B cell (primary cell): ENCODE measurements at regions of chr1 and their contacts with region 1.

Region 1: DNA sequence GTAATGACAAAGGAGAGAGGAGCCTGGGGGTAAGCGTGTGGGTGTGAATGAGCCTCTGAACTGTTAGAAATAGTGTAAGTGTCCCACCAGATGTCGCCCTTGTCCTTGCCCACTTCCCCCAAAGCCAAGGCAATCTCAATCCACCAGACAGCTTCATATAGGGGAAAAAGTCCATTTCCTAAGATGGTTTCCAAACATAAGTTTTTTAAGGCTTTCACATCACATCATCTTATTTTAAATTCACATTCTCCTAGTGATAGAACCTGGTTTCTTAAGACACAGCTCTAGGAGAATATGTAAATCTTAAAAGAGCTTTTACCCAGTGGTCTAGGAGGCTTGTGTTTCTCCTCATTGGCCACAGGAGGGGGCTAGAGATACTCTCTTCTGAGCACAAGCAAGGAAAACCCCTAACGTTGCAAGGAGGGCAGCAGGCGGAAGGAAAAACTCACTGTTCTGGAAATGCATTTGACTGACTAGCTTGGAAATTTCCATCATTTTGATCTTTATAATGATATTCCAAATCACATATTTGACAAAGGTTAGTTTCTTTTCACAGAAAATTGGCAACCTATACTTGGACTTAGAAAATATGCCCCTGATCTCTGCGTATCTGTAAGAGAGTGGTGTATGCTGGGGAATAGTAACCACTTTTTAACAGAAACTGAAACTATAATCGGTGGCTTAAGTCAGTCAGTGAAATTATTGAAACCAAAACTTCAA is 51.9 kb upstream of the LPAR3 start:
- DNase-seq: peak; percentile 95
- ATAC-seq: peak; percentile 93
- H3K4me3 ChIP-seq: peak overlapping the region; percentile 49 to 76 (median 60)
- H3K4me3 Mint-ChIP-seq: peak overlapping the region; percentile 80
- H3K27ac ChIP-seq: peak overlapping the region; percentile 78 to 83
- H3K27ac Mint-ChIP-seq: peak overlapping the region; percentile 87
- H3K4me1 ChIP-seq: peaks cover 0 to 13% of the 10 kb centered on the region in 2 donors
- H3K4me1 Mint-ChIP-seq: peaks cover 10% of the 10 kb centered on the region
- H3K27me3 ChIP-seq: no peaks in the 10 kb centered on the region
- H3K27me3 Mint-ChIP-seq: no peaks in the 10 kb centered on the region
- CTCF ChIP-seq: peak; percentile 99

Region 2: DNA sequence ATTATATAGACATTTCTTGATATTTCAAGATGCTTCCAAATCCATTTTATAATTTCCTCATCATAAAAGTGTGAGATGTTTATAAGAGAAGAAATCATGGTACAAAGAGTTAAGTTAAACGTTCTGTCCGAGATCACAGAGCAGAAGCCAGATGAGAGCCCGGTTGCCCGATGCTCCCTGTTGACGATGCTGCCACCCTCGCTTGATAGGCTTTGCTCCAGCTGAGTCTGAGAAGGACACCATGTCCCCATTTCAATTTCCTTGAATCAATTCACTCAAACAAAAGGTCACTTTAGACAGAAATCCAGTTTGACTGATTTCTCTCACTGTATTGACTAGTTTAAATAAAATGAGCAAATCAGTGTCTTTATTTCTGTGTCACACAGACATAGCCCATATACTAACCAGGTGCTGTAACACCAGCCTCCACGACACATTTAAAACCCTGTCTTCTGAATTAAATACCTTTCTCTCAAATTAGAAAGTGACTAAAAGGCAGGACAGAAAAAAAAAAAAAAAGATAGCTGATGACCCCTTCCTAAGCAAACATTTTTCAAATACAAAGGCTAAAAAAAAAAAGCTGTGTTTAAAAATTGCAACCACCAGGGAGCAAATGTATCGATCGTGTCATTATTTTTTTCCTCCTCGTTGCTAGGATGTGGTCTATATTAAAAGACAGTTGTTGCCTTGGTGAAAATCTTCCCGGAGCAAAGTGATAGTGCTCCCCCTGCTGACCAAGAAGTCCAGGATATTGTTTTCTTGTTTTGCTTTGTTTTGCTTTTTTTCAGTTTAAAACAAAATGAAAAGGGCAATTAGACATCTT is 511.5 kb before region 1 on chr1:
- CTCF ChIA-PET with region 1: interaction called, 3 read pairs
- POLR2A ChIA-PET with region 1: no interaction called
- intact Hi-C with region 1: loop called (anchors 5 kb)
- DNase-seq: peak; percentile 78
- ATAC-seq: peak; percentile 34
- H3K4me3 ChIP-seq: peak overlapping the region in 4 of 5 experiments; percentile 19 to 43 (median 32)
- H3K4me3 Mint-ChIP-seq: peak overlapping the region; percentile 79
- H3K27ac ChIP-seq: peak overlapping the region in 1 of 2 donors; percentile 55
- H3K27ac Mint-ChIP-seq: peak overlapping the region; percentile 20
- H3K4me1 ChIP-seq: peaks cover 40 to 43% of the 10 kb centered on the region in 2 donors
- H3K4me1 Mint-ChIP-seq: peaks cover 9% of the 10 kb centered on the region
- H3K27me3 ChIP-seq: no peaks in the 10 kb centered on the region
- H3K27me3 Mint-ChIP-seq: no peaks in the 10 kb centered on the region
- CTCF ChIP-seq: peak; percentile 70

Region 3: DNA sequence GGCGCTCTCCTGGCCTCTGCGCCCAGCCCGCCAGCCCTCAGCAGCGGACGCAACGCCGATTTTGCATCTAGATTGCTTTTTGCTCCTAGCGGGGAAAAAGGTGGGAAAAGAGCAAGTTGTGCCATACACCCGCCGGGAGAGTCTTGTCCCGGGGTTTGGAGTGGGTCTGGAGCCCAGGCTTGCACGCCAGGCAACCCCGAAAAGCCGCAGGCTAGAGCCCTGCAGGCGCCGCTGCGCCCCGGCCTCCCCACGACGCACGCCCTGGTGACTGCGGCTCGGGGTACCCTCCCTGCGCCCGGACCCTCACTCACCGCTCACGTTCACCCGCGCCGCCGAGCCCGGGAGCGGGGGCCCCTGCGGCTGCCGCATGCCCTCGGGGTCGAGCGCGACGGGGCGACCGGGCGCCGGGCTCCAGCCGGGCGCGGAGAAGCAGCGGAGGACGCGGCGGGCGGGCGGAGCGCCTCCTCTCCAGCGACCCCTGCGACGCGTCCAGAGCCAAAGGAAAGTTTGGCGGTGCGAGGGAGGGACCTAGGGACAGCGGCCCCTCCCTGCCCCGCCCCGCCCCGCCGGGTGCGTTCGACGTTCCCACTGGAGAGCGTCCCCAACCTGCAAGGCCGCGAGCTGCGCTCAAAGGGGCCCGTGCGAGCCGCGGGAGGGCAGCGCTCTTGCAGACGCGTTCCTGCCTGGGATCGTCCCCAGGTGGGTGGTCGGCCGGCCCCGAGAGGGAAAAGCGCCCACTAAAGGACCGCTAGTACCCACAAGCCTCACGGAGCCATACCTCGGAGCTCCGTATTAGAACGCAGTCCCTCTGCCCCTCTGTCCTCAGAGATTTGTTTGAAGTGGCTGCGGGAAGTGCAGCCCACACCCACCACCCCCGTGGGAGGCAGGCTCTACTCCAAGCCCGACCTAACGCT is 52.0 kb before region 1 on chr1 and contains the start of gene LPAR3:
- CTCF ChIA-PET with region 1: no interaction called
- POLR2A ChIA-PET with region 1: no interaction called
- intact Hi-C with region 1: no loop called
- DNase-seq: no peak
- ATAC-seq: no peak
- H3K4me3 ChIP-seq: no peak within 1 kb of the TSS
- H3K4me3 Mint-ChIP-seq: peak within 1 kb of the TSS; percentile 27
- H3K27ac ChIP-seq: no peak within 1 kb of the TSS
- H3K27ac Mint-ChIP-seq: no peak within 1 kb of the TSS
- H3K4me1 ChIP-seq: peaks cover 9% of the 10 kb centered on the region in 2 donors
- H3K4me1 Mint-ChIP-seq: peaks cover 7% of the 10 kb centered on the region
- H3K27me3 ChIP-seq: peaks cover 0 to 25% (median 21%) of the 10 kb centered on the region in 4 experiments
- H3K27me3 Mint-ChIP-seq: peaks cover 47% of the 10 kb centered on the region
- CTCF ChIP-seq: no peak
- total RNA-seq, gene LPAR3: 0.36 TPM in 1 of 2 replicates, not detected in the other

Region 4: GRCh38 chr1:84923317-84923716 is 21.6 kb before region 1 on chr1:
- CTCF ChIA-PET with region 1: interaction called, 11 read pairs
- POLR2A ChIA-PET with region 1: no interaction called
- intact Hi-C with region 1: no loop called
- DNase-seq: no peak
- ATAC-seq: no peak
- H3K4me3 ChIP-seq: no peak overlapping the region
- H3K4me3 Mint-ChIP-seq: no peak overlapping the region
- H3K27ac ChIP-seq: no peak overlapping the region
- H3K27ac Mint-ChIP-seq: no peak overlapping the region
- H3K4me1 ChIP-seq: no peaks in the 10 kb centered on the region
- H3K4me1 Mint-ChIP-seq: no peaks in the 10 kb centered on the region
- H3K27me3 ChIP-seq: peaks cover 0 to 3% (median 0%) of the 10 kb centered on the region in 4 experiments
- H3K27me3 Mint-ChIP-seq: peaks cover 8% of the 10 kb centered on the region
- CTCF ChIP-seq: no peak

Region 5: GRCh38 chr1:84988588-84988987 is 43.7 kb after region 1 on chr1:
- CTCF ChIA-PET with region 1: interaction called, 53 read pairs
- POLR2A ChIA-PET with region 1: interaction called, 4 read pairs
- intact Hi-C with region 1: no loop called
- DNase-seq: peak; percentile 34
- ATAC-seq: peak; percentile 56
- H3K4me3 ChIP-seq: no peak overlapping the region
- H3K4me3 Mint-ChIP-seq: peak overlapping the region; percentile 8
- H3K27ac ChIP-seq: no peak overlapping the region
- H3K27ac Mint-ChIP-seq: peak overlapping the region; percentile 3
- H3K4me1 ChIP-seq: peaks cover 33 to 48% of the 10 kb centered on the region in 2 donors
- H3K4me1 Mint-ChIP-seq: peaks cover 57% of the 10 kb centered on the region
- H3K27me3 ChIP-seq: no peaks in the 10 kb centered on the region
- H3K27me3 Mint-ChIP-seq: no peaks in the 10 kb centered on the region
- CTCF ChIP-seq: no peak

Region 6: DNA sequence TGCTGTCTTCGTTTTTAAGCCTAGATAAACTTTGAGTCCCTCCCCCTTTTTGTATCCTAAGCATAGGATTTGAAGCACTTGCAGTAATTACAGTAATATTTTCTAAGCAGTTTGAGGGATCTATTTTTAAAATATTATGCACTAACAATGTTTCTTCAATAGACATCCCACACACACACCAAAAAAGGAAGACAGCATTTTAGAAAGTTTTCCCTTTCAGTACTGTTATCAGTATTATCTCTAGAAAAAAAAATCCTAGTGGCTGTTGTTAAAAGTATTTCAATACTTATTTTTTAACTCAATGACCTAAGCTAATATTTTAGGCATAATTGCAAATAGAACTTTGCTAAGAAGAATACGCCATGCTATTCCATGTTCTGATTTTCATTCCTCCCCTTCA is 88.3 kb after region 1 on chr1:
- CTCF ChIA-PET with region 1: interaction called, 458 read pairs
- POLR2A ChIA-PET with region 1: no interaction called
- intact Hi-C with region 1: no loop called
- DNase-seq: no peak
- ATAC-seq: no peak
- H3K4me3 ChIP-seq: no peak overlapping the region
- H3K4me3 Mint-ChIP-seq: no peak overlapping the region
- H3K27ac ChIP-seq: no peak overlapping the region
- H3K27ac Mint-ChIP-seq: no peak overlapping the region
- H3K4me1 ChIP-seq: no peaks in the 10 kb centered on the region
- H3K4me1 Mint-ChIP-seq: no peaks in the 10 kb centered on the region
- H3K27me3 ChIP-seq: no peaks in the 10 kb centered on the region
- H3K27me3 Mint-ChIP-seq: peaks cover 21% of the 10 kb centered on the region
- CTCF ChIP-seq: no peak

Region 7: GRCh38 chr1:85200870-85201339 is 256.0 kb after region 1 on chr1 and contains the start of gene SYDE2:
- CTCF ChIA-PET with region 1: interaction called, 6 read pairs
- POLR2A ChIA-PET with region 1: no interaction called
- intact Hi-C with region 1: loop called (anchors 1 kb)
- DNase-seq: peak; percentile 86
- ATAC-seq: peak; percentile 83
- H3K4me3 ChIP-seq: peak within 1 kb of the TSS; percentile 46 to 73 (median 62)
- H3K4me3 Mint-ChIP-seq: peak within 1 kb of the TSS; percentile 98
- H3K27ac ChIP-seq: peak within 1 kb of the TSS in 1 of 2 donors; percentile 85
- H3K27ac Mint-ChIP-seq: peak within 1 kb of the TSS; percentile 93
- H3K4me1 ChIP-seq: peaks cover 16 to 26% of the 10 kb centered on the region in 2 donors
- H3K4me1 Mint-ChIP-seq: peaks cover 15% of the 10 kb centered on the region
- H3K27me3 ChIP-seq: peaks cover 0 to 35% (median 25%) of the 10 kb centered on the region in 4 experiments
- H3K27me3 Mint-ChIP-seq: peaks cover 42% of the 10 kb centered on the region
- CTCF ChIP-seq: no peak
- total RNA-seq, gene SYDE2: 0.89 and 1.0 TPM in 2 replicates

Region 8: GRCh38 chr1:85259118-85259911 is 314.4 kb after region 1 on chr1 and contains the start of gene C1orf52:
- CTCF ChIA-PET with region 1: interaction called, 223 read pairs
- POLR2A ChIA-PET with region 1: interaction called, 6 read pairs
- intact Hi-C with region 1: loop called (anchors 1 kb)
- DNase-seq: peak; percentile 94
- ATAC-seq: peak; percentile 98
- H3K4me3 ChIP-seq: peak within 1 kb of the TSS; percentile 66 to 94 (median 85)
- H3K4me3 Mint-ChIP-seq: peak within 1 kb of the TSS; percentile 95
- H3K27ac ChIP-seq: peak within 1 kb of the TSS; percentile 62 to 83
- H3K27ac Mint-ChIP-seq: peak within 1 kb of the TSS; percentile 92
- H3K4me1 ChIP-seq: peaks cover 17 to 18% of the 10 kb centered on the region in 2 donors
- H3K4me1 Mint-ChIP-seq: peaks cover 38% of the 10 kb centered on the region
- H3K27me3 ChIP-seq: no peaks in the 10 kb centered on the region
- H3K27me3 Mint-ChIP-seq: no peaks in the 10 kb centered on the region
- CTCF ChIP-seq: peak; percentile 99
- total RNA-seq, gene C1orf52: 39.9 and 45.3 TPM in 2 replicates